Activated T-helper 1 cell treated with anti-CD3 and anti-CD28 coated beads, Interleukin-12 subunit alpha, Interleukin-12 subunit beta, Interleukin-2, Interleukin-4 antibody, amounts not matched to agents 30 ng/mL and 10 ng/mL and 1 ng/mL, durations not matched to agents 14 hours and 24 hours and 36 hours (primary cell): ENCODE measurements at regions of chr1 and their contacts with region 1.

Region 1: GRCh38 chr1:111603979-111604378 is 15.6 kb upstream of the RAP1A start:
- DNase-seq: peak; percentile 82
- H3K4me3 Mint-ChIP-seq: peak overlapping the region; percentile 80
- H3K27ac Mint-ChIP-seq: peak overlapping the region; percentile 97
- H3K4me1 Mint-ChIP-seq: peaks cover 74% of the 10 kb centered on the region
- H3K27me3 Mint-ChIP-seq: no peaks in the 10 kb centered on the region

Region 2: DNA sequence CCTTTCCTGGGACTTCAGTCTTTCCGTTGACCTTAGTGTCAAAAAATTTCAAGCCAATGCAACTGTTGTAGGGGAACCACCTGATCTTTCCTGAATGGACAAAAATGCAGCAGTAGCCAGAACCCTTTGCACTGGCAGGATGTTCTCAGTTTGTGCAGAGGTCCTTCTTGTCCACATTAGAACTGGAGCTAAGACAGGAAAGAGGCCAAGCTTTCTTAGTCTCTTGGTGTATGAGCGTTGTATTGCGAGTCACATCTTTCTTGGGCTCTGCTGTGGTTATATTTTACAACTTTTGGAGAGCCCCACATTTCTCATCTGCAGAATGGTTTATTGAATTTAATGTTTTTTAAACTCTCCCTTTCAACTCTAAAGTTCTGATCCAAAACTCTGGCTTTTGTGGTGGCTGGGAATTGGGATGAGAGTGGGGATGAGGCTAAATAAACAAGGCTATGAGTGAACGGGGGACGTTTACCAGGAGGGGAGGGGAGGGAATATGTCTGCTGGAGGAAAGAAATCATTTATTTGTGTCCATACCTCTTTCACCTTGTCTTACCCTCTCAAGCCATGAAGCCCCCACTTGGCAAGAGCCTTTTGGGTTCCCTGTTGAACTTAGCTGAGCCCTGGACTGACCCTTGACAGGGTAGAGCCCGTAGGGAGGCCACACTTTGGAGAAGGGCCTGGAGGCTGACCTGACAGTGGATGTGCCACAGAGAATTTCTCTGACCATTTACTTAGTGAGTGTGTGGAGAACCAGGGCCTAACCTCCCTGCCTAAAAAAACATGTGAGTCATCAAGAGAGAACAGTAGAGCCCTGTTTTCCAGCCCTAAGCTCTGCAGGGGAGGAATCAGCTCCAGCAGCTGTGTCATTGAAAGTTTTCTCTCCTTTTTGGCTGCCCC is 375.9 kb before region 1 on chr1:
- intact Hi-C with region 1: no loop called
- DNase-seq: no peak
- H3K4me3 Mint-ChIP-seq: peak overlapping the region; percentile 46
- H3K27ac Mint-ChIP-seq: peak overlapping the region; percentile 71
- H3K4me1 Mint-ChIP-seq: peaks cover 85% of the 10 kb centered on the region
- H3K27me3 Mint-ChIP-seq: no peaks in the 10 kb centered on the region

Region 3: GRCh38 chr1:111516005-111516535 is 87.9 kb before region 1 on chr1:
- intact Hi-C with region 1: loop called (anchors 2 kb)
- DNase-seq: no peak
- H3K4me3 Mint-ChIP-seq: peak overlapping the region; percentile 13
- H3K27ac Mint-ChIP-seq: peak overlapping the region; percentile 63
- H3K4me1 Mint-ChIP-seq: peaks cover 47% of the 10 kb centered on the region
- H3K27me3 Mint-ChIP-seq: peaks cover 2% of the 10 kb centered on the region

Region 4: GRCh38 chr1:111559736-111560279 is 44.2 kb before region 1 on chr1:
- intact Hi-C with region 1: loop called (anchors 5 kb)
- DNase-seq: no peak
- H3K4me3 Mint-ChIP-seq: no peak overlapping the region
- H3K27ac Mint-ChIP-seq: no peak overlapping the region
- H3K4me1 Mint-ChIP-seq: peaks cover 13% of the 10 kb centered on the region
- H3K27me3 Mint-ChIP-seq: peaks cover 13% of the 10 kb centered on the region

Region 5: GRCh38 chr1:111587509-111588174 is 16.3 kb before region 1 on chr1:
- intact Hi-C with region 1: loop called (anchors 2 kb)
- DNase-seq: no peak
- H3K4me3 Mint-ChIP-seq: no peak overlapping the region
- H3K27ac Mint-ChIP-seq: no peak overlapping the region
- H3K4me1 Mint-ChIP-seq: peaks cover 26% of the 10 kb centered on the region
- H3K27me3 Mint-ChIP-seq: no peaks in the 10 kb centered on the region

Region 6: DNA sequence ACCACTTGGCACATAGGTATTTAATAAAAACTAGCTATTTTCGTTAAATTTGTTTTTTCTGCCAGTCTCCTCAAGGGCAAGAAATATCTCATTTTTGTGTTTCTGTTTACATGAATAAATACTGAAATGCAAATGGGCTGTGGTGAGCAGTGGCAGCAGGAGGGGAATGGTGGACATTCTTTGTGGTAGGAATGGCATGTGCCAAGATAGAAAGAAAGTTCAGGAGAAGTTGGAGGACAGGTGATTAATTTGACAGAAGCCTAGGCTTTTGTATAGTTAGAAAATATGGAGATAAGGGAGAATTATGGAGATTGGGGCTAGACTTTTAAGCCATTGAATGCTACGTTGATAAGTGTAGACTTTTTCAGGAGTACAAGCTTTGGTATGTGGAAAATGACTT is 24.2 kb after region 1 on chr1:
- intact Hi-C with region 1: loop called (anchors 1 kb)
- DNase-seq: no peak
- H3K4me3 Mint-ChIP-seq: peak overlapping the region; percentile 63
- H3K27ac Mint-ChIP-seq: peak overlapping the region; percentile 75
- H3K4me1 Mint-ChIP-seq: peaks cover 90% of the 10 kb centered on the region
- H3K27me3 Mint-ChIP-seq: no peaks in the 10 kb centered on the region

Region 7: DNA sequence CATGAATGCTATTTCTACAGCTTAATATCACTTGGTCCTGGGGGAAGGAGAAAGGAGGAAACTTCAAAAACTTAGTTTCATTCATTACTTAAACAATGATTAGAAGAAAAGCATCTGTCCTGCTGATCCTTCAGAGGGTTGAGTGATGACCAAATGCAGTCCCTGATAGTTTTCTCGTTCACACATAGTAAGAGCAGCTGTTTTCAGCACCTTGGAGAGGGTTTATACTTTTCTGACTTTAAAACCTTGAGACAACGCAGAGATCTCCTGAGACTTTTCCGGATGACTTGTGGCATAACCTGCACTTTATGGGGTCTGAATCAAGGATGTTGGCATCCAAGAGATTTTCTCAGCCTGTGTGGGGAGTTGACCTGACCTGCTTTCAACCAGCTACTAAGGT is 479.5 kb after region 1 on chr1:
- intact Hi-C with region 1: no loop called
- DNase-seq: no peak
- H3K4me3 Mint-ChIP-seq: no peak overlapping the region
- H3K27ac Mint-ChIP-seq: no peak overlapping the region
- H3K4me1 Mint-ChIP-seq: no peaks in the 10 kb centered on the region
- H3K27me3 Mint-ChIP-seq: no peaks in the 10 kb centered on the region